ENCODE measurements at regions of chr3 and their contacts with region 1.

Region 1: GRCh38 chr3:38346587-38347410 is at the start of gene XYLB:
- DNase-seq: peak; percentile 81
- ATAC-seq: peak; percentile 96
- H3K4me3 Mint-ChIP-seq: peak within 1 kb of the TSS; percentile 66
- H3K27ac Mint-ChIP-seq: no peak within 1 kb of the TSS
- H3K4me1 Mint-ChIP-seq: no peaks in the 10 kb centered on the region
- H3K27me3 Mint-ChIP-seq: peaks cover 25% of the 10 kb centered on the region
- CTCF ChIP-seq: peak; percentile 37; the same call in 1 of the 2 replicates
- total RNA-seq, gene XYLB: 3.1 to 4.1 TPM (median 3.3 TPM) in 3 replicates

Region 2: GRCh38 chr3:38227989-38228388 is 118.8 kb before region 1 on chr3:
- CTCF ChIA-PET with region 1: no interaction called
- POLR2A ChIA-PET with region 1: no interaction called
- DNase-seq: no peak
- ATAC-seq: no peak
- H3K4me3 Mint-ChIP-seq: no peak overlapping the region
- H3K27ac Mint-ChIP-seq: no peak overlapping the region; the same call in 1 of the 2 replicates
- H3K4me1 Mint-ChIP-seq: no peaks in the 10 kb centered on the region
- H3K27me3 Mint-ChIP-seq: no peaks in the 10 kb centered on the region
- CTCF ChIP-seq: no peak

Region 3: DNA sequence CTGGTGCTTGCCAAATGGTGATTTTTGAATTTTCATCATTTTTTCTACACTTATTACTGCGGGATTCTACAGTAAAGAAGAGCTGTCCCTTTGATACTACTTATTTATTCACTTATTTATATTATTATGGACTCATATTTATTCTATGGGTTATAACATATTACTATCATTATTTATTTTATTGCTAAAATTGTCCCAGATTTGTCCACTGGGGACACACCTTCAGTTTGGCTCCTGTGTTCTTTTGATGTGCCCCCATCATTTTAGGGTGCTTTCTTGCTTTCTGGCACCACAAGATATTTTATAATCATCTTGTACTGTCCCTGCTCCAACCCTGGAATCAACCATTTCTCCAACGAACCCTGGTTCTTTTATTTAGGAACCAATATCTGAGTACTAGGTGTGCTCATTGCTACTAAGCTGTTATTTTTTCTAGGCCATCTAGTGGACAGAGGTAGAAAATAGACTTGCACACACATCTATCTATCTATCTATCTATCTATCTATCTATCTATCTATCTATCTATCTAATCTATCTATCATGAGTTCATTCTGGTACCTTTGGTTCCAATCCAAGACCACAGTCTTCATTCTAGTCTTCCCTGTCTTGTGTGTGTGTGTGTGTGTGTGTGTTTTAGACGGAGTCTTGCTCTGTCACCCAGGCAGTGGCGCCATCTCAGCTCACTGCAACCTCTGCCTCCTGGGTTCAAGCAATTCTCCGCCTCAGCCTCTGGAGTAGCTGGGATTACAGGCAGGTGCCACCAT is 48.7 kb before region 1 on chr3:
- CTCF ChIA-PET with region 1: interaction called, 12 read pairs
- POLR2A ChIA-PET with region 1: no interaction called
- DNase-seq: no peak
- ATAC-seq: peak; percentile 68
- H3K4me3 Mint-ChIP-seq: no peak overlapping the region
- H3K27ac Mint-ChIP-seq: no peak overlapping the region
- H3K4me1 Mint-ChIP-seq: no peaks in the 10 kb centered on the region
- H3K27me3 Mint-ChIP-seq: no peaks in the 10 kb centered on the region; the same call in 1 of the 2 replicates
- CTCF ChIP-seq: peak; percentile 22; the same call in 1 of the 2 replicates

Region 4: GRCh38 chr3:38311476-38311875 is 35.3 kb before region 1 on chr3:
- CTCF ChIA-PET with region 1: no interaction called
- POLR2A ChIA-PET with region 1: no interaction called
- DNase-seq: no peak
- ATAC-seq: no peak
- H3K4me3 Mint-ChIP-seq: no peak overlapping the region
- H3K27ac Mint-ChIP-seq: no peak overlapping the region
- H3K4me1 Mint-ChIP-seq: peaks cover 6% of the 10 kb centered on the region; the same call in 1 of the 2 replicates
- H3K27me3 Mint-ChIP-seq: no peaks in the 10 kb centered on the region; the same call in 1 of the 2 replicates
- CTCF ChIP-seq: no peak

Region 5: DNA sequence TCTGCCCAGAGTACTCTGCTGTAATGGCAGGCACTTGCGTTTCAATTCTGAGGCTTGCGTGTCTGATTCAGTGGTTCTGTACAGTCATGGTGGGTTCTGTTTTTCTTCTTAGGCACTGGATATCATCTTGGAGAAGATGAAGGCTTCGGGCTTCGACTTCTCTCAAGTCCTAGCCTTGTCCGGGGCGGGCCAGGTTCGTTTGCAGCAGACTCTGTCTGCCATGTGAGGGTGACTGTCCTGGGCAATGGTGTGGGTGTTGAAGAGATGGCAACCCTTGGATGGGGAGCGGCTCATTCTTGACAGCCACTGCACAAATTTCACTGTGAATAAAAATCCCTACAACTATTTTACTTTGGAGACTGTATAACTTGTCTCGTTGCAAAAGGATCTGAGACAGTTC is 16.0 kb after region 1 on chr3:
- CTCF ChIA-PET with region 1: no interaction called
- POLR2A ChIA-PET with region 1: no interaction called
- DNase-seq: no peak
- ATAC-seq: no peak
- H3K4me3 Mint-ChIP-seq: no peak overlapping the region
- H3K27ac Mint-ChIP-seq: no peak overlapping the region
- H3K4me1 Mint-ChIP-seq: no peaks in the 10 kb centered on the region
- H3K27me3 Mint-ChIP-seq: no peaks in the 10 kb centered on the region
- CTCF ChIP-seq: no peak

Region 6: DNA sequence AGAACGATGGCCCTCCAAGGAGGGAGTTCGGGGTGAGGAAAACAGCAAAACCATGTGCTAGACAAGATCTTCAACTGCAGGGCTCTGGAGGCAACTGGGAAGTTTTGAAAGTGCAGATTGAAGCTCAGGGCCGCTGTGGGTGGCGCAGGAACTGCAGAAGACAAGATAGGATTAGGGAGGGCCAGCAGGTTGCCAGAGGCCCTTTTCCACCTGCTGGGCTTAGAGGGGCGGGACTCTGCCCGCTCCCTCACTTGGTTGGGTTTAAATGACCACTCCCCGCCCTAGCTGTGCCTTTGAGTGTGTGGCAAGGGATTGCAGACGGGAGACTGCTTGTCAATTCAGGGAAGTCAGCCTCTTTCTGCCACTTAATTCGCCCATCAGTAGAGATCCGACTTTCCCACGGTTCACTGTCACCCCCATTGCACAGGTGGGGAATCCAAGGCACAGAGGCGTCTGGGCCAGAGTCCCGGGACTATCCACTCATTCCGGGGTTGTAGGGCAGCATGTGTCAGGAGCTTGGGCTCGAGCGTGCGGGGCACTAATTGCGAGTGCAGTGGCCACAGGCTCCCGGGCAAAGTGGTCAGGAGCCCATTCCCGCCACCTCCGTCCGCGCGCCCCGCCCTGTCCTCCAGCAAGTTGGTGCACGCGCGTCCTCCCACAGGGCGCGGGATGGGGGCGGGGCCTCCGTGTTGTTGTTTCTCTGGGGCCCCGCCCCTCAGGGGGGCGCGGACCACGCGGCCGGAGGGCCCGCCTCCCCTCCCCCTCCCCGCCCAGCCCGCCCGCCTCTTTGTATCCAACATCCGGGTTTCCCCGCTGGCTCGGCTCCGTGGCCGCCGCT is 106.5 kb after region 1 on chr3 and contains the start of gene ACVR2B:
- CTCF ChIA-PET with region 1: interaction called, 20 read pairs
- POLR2A ChIA-PET with region 1: interaction called, 7 read pairs
- DNase-seq: peak; percentile 82
- ATAC-seq: peak; percentile 74
- H3K4me3 Mint-ChIP-seq: peak within 1 kb of the TSS; percentile 98
- H3K27ac Mint-ChIP-seq: peak within 1 kb of the TSS; percentile 98
- H3K4me1 Mint-ChIP-seq: peaks cover 31% of the 10 kb centered on the region
- H3K27me3 Mint-ChIP-seq: no peaks in the 10 kb centered on the region; the same call in 1 of the 2 replicates
- CTCF ChIP-seq: no peak
- total RNA-seq, gene ACVR2B: 104 to 117 TPM (median 112 TPM) in 3 replicates

Region 7: DNA sequence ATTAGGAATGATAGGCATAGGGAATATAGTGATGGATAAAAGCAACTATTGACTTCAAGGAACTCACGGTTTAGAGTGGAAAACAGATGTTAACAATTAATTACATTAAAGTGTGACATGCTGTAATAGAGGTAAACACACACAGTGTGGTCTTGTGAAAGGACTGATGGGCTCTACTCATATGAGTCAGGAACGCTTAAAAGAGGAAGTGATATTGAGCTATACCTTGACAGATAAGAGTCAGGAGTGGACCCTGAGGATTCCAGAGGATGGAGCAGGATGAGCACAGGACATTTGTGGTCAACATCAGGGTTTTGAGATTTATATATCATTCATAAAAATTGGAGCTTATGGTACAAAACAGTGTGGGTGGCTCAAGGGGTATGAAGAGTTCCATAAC is 160.3 kb after region 1 on chr3:
- CTCF ChIA-PET with region 1: no interaction called
- POLR2A ChIA-PET with region 1: no interaction called
- DNase-seq: no peak
- ATAC-seq: no peak
- H3K4me3 Mint-ChIP-seq: no peak overlapping the region
- H3K27ac Mint-ChIP-seq: no peak overlapping the region
- H3K4me1 Mint-ChIP-seq: no peaks in the 10 kb centered on the region
- H3K27me3 Mint-ChIP-seq: no peaks in the 10 kb centered on the region
- CTCF ChIP-seq: no peak